ENCODE measurements at regions of chr6 and their contacts with region 1.

Region 1: DNA sequence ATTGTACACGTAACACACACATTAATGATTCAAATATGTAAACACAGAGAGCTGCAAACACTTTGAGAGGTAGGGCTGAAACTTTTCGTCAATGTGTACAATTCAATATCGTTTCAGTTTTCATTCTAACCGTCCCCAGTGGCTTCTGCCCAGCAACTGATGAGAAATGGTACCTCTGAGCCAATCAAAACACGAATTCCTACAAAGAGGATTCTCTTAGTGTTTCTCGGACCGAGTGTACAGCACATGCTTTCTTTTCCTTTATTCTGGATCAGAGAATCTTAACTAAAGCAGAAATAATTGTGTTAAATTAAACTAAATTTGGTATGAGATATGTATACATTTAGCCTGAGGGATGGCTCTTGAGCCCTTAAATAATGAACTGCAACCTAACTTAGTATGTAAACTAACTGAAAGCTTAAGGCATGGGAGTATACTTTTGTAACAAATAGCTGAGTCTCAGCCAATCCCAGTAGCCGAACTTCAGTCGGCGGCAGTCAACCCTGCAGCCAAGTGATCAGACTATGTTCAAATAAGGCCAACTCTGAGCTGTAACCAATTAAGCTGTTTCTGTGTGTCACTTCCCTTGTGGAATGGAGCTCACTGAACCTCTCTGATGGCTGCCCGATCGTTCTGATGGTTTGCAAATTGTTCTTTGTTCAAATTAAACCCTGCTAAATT is 16.1 kb downstream of the BTN2A1 start:
- DNase-seq: peak; percentile 87
- H3K4me3 Mint-ChIP-seq: peak overlapping the region; percentile 98
- H3K27ac Mint-ChIP-seq: peak overlapping the region; percentile 100
- H3K4me1 Mint-ChIP-seq: peaks cover 42% of the 10 kb centered on the region
- H3K27me3 Mint-ChIP-seq: no peaks in the 10 kb centered on the region

Region 2: GRCh38 chr6:25682324-25682723 is 791.6 kb before region 1 on chr6:
- CTCF ChIA-PET with region 1: no interaction called
- POLR2A ChIA-PET with region 1: no interaction called
- intact Hi-C with region 1: no loop called
- DNase-seq: no peak
- H3K4me3 Mint-ChIP-seq: no peak overlapping the region
- H3K27ac Mint-ChIP-seq: no peak overlapping the region
- H3K4me1 Mint-ChIP-seq: no peaks in the 10 kb centered on the region
- H3K27me3 Mint-ChIP-seq: peaks cover 12% of the 10 kb centered on the region

Region 3: DNA sequence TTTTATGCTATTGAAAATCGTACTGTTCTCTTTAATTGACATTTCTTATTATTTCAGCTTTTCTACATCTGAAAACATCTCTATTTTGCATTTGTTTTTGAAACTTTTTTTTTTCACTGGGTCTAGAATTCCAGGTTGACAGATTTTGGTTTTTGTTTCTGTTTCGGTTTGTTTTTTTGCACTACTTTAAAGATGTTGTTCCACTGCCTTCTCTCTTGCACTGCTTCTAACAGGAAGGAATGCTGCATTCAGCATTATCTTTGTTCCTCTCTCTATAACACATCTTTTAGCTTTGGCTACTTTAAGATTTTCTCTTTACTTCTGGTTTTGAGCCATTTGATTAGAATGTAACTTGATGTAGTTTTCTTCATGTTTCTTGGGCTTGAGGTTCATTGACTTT is 621.9 kb before region 1 on chr6:
- CTCF ChIA-PET with region 1: no interaction called
- POLR2A ChIA-PET with region 1: no interaction called
- intact Hi-C with region 1: no loop called
- DNase-seq: no peak
- H3K4me3 Mint-ChIP-seq: no peak overlapping the region
- H3K27ac Mint-ChIP-seq: no peak overlapping the region
- H3K4me1 Mint-ChIP-seq: peaks cover 14% of the 10 kb centered on the region
- H3K27me3 Mint-ChIP-seq: peaks cover 11% of the 10 kb centered on the region

Region 4: DNA sequence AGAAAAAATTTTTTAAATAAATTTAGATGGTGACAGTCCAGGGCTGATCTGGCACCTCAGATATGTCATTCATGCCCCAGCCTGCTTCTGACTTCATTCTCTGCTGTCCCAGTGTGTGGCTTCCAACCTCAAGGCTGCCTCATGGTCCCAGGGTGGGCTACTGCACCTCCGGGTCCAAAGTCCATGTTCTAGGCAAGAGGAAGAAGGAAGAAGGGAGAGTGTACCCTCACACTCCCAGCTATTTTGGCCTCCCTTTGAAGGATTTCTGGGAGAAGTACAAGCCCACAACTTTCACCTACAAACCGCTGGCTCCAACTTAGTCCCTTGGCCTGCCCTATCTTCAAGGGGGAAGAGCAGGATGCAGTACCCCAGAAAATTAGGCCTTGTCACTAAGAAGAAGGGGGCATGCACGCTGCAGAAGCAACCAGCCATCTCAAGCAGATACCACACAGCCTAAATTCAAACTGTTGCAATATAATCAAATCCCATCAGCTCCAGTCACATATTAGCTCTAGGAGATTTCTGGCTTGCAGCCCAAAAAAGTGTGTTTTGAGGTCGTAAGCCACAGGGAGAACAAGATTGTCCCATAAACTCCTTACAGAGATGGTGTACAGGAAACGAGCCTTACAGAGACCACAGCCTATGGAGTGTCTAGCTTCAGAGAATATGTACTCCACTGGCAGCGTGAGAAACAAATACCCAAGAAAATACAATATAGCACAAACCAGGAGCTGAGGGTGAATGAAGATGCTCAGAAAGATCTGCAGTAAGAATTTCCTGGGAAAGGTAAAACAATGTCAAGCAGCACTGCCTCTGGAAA is 109.8 kb before region 1 on chr6:
- CTCF ChIA-PET with region 1: no interaction called
- POLR2A ChIA-PET with region 1: interaction called, 4 read pairs
- intact Hi-C with region 1: loop called (anchors 1 kb)
- DNase-seq: peak; percentile 18
- H3K4me3 Mint-ChIP-seq: no peak overlapping the region
- H3K27ac Mint-ChIP-seq: no peak overlapping the region
- H3K4me1 Mint-ChIP-seq: peaks cover 54% of the 10 kb centered on the region
- H3K27me3 Mint-ChIP-seq: no peaks in the 10 kb centered on the region

Region 5: GRCh38 chr6:26401987-26402658 is 71.8 kb before region 1 on chr6 and contains the start of gene BTN3A1:
- CTCF ChIA-PET with region 1: no interaction called
- POLR2A ChIA-PET with region 1: no interaction called
- intact Hi-C with region 1: loop called (anchors 2 kb)
- DNase-seq: peak; percentile 80
- H3K4me3 Mint-ChIP-seq: peak within 1 kb of the TSS; percentile 89
- H3K27ac Mint-ChIP-seq: peak within 1 kb of the TSS; percentile 95
- H3K4me1 Mint-ChIP-seq: peaks cover 47% of the 10 kb centered on the region
- H3K27me3 Mint-ChIP-seq: no peaks in the 10 kb centered on the region
- total RNA-seq, gene BTN3A1: 36.5 to 39.0 TPM

Region 6: DNA sequence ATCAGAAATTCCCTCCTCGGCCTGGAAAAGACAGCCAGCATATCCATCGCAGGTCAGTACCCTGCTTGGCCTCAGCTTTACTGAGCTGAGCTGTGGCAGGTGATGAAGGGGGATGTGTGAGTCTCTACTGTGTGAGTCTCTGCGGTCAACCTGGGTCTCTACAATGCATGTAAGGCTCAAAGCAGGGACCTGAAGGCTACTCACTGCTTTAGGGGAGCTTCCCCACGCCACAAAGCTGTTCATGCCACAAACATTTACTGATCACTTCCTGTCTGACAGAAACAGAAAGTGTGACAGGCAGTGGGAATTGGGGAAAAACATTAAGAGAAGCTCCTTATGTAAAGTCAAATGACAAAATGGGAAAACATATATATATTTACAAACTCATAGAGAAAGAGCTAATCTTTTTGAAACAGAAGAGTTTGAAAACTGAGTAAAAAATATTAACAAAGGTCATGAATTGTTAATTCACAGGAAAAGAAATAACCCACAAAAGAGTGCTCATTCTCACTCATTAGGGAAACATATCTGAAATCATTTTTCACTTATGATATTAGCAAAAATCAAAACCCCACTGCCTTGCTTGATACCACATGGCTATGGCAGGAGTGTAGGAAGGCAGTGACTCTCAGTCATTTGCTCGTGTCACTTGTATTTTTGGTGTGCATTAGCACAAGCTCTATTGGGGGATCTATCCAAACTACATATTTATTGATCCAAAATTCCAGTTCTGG is 27.8 kb before region 1 on chr6:
- CTCF ChIA-PET with region 1: interaction called, 3 read pairs
- POLR2A ChIA-PET with region 1: interaction called, 14 read pairs
- intact Hi-C with region 1: no loop called
- DNase-seq: peak; percentile 73
- H3K4me3 Mint-ChIP-seq: no peak overlapping the region
- H3K27ac Mint-ChIP-seq: peak overlapping the region; percentile 79
- H3K4me1 Mint-ChIP-seq: peaks cover 60% of the 10 kb centered on the region
- H3K27me3 Mint-ChIP-seq: no peaks in the 10 kb centered on the region

Region 7: DNA sequence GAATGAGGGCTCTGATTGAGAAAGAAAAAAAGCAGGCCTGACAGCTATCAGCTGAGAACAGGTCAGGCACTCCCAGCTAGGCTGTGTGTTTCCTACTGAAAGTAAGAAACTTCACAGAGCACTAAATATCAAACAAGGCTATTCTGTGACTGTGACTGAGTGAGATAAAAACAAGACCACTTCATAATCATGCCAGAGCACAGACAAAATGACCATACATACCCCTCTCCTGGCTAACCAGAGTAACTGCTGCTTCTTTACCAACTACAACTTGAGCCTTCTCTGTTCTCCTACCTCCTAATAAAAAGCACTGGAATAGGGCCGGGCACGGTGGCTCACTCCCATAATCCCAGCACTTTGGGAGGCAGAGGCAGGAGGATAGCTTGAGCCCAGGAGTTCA is 19.4 kb after region 1 on chr6:
- CTCF ChIA-PET with region 1: no interaction called
- POLR2A ChIA-PET with region 1: no interaction called
- intact Hi-C with region 1: no loop called
- DNase-seq: no peak
- H3K4me3 Mint-ChIP-seq: no peak overlapping the region
- H3K27ac Mint-ChIP-seq: no peak overlapping the region
- H3K4me1 Mint-ChIP-seq: peaks cover 10% of the 10 kb centered on the region
- H3K27me3 Mint-ChIP-seq: no peaks in the 10 kb centered on the region

Region 8: GRCh38 chr6:26520853-26521599 is 47.1 kb after region 1 on chr6:
- CTCF ChIA-PET with region 1: no interaction called
- POLR2A ChIA-PET with region 1: interaction called, 4 read pairs
- intact Hi-C with region 1: loop called (anchors 1 kb)
- DNase-seq: peak; percentile 89
- H3K4me3 Mint-ChIP-seq: peak overlapping the region; percentile 72
- H3K27ac Mint-ChIP-seq: peak overlapping the region; percentile 81
- H3K4me1 Mint-ChIP-seq: peaks cover 30% of the 10 kb centered on the region
- H3K27me3 Mint-ChIP-seq: peaks cover 1% of the 10 kb centered on the region

Region 9: DNA sequence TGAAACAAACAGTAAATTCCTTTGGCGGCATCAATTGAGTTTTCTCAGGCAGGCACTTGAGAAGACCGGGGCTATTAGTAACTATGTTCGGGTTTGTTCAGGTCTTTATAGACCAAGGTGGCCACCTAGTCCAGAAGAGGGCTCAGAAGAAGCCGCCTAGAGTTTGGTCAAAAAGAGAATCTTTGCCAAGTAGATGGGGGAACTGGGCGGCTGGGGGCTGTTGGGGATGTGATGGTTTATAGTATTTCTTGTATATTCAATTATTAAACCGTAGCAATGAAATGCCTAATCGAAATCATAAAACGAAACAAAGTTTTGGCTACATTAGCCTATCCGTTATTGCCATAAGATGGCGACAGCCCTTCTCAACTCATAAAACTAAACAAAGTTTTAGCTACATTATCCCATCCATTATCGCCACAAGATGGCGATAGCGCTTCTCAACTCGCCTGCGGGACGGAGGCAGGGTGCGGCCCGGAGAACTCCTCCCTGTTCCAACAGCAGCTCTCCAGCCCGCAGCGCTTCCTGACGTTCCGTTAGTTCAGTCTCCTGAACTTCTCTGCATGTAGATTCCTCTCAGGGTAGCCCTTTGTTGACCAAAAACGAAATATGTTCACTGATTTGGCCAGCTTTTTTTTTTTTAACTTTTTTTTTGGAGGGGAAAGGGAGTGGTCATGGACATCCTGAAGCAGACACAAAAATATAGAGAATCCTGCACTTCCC is 653.1 kb after region 1 on chr6:
- CTCF ChIA-PET with region 1: no interaction called
- POLR2A ChIA-PET with region 1: no interaction called
- intact Hi-C with region 1: loop called (anchors 1 kb)
- DNase-seq: peak; percentile 88
- H3K4me3 Mint-ChIP-seq: peak overlapping the region; percentile 71
- H3K27ac Mint-ChIP-seq: peak overlapping the region; percentile 65
- H3K4me1 Mint-ChIP-seq: peaks cover 19% of the 10 kb centered on the region
- H3K27me3 Mint-ChIP-seq: no peaks in the 10 kb centered on the region